ENCODE measurements at regions of chr13 and their contacts with region 1.

Region 1: DNA sequence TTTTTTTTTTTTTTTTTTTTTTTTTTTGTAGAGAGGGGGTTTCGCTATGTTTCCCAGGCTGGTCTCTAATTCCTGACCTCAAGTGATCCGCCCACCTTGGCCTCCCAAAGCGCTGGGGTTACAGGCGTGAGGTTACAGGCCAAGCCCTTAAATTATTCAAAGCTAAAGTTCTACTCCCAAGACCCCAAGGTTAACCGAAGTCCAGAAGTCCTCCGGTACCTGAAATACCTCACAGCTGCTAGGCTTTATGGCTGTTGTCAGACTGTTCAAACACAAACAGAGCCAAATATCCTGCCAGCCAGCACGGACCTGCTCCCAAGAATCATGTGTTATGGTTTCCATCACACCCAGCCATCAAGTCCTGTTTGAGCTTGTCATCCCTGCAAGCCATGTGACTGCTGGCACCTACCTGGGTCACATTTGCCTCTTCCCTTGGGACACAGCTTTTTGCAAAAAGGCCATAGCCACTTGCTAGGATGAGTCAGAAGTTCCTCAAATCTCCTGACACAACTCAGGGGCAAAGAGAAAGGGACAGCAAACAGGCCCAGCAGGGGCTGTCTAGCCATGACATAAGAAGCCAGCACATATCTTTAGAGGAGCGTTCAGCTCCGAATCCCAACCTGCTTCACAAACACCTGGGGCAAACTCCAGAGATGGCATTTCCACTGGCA is 129.9 kb downstream of the FOXO1 start:
- DNase-seq: no peak
- H3K4me3 ChIP-seq: no peak overlapping the region
- H3K27ac ChIP-seq: no peak overlapping the region
- H3K4me1 ChIP-seq: peaks cover 14% of the 10 kb centered on the region
- H3K27me3 ChIP-seq: no peaks in the 10 kb centered on the region
- CTCF ChIP-seq: no peak

Region 2: DNA sequence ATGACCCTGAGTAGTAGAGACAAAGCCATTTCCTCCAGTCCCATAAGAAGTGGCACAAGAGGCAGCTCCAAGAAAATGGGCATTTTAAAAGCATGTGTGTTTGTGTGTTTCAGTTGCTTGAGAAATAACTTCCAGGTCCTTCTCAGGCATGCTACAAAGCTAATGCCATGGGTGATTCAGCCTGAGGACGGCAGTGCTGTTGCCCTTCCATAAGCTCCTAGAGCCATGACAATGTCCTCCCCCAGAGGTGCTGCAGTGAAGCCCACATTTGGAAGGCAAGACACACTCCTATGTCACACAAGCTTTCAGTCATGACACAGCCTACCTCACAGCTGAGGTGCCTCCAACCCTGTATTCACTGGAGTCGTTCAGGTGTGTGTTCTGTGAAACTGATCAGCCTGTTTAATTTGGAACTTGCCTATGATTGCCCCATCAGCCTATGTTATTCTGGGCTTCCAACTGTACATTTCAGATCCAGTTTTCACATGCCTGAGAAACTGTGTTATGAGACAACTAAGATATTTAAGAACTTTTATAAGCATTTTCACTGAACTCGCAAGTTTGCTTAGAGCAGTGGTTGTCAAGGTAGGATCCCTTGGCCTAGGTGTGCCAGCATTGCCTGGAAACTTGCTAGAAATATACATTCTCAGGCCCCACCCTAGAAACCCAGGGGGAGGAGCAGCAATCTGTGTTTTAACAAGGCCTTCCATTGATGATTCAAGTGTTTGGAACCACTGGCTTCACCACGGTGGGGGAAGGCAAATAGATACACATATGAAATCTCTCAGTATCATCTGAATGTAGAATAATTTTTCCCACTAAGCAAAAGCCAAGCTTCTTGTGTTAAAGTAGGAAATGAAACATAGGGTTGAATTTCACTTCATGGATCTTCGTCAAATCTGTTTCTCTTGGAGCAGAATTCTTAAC is 83.6 kb before region 1 on chr13:
- CTCF ChIA-PET with region 1: no interaction called
- POLR2A ChIA-PET with region 1: interaction called, 16 read pairs
- intact Hi-C with region 1: no loop called
- DNase-seq: no peak
- H3K4me3 ChIP-seq: no peak overlapping the region
- H3K27ac ChIP-seq: no peak overlapping the region
- H3K4me1 ChIP-seq: no peaks in the 10 kb centered on the region
- H3K27me3 ChIP-seq: no peaks in the 10 kb centered on the region
- CTCF ChIP-seq: no peak

Measured in A673 (cell line).